ENCODE measurements at regions of chr4 and their contacts with region 1.

Region 1: DNA sequence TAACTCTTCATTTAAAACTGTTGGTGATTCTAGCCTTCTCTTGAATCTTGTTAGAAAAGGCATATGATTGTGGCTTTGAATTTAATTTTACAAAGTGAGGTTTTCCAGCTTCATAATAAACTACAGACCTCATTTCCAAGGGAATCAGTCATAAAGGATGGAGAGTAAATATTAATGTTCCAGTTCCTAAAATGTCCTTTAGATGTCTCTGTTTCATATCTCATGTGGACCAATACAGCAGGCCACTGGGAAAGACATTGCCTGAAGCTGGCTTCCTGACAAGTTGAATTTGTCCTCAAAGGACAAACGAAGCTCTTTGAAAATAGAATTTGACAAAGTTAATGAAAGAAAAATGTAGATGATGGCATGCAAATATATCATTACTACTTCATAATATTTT is 125.4 kb downstream of the ZNF330 start:
- DNase-seq: no peak
- H3K4me3 ChIP-seq: no peak overlapping the region
- H3K27ac ChIP-seq: no peak overlapping the region
- H3K4me1 ChIP-seq: peaks cover 0 to 11% (median 3%) of the 10 kb centered on the region in 4 donors
- H3K27me3 ChIP-seq: no peaks in the 10 kb centered on the region
- CTCF ChIP-seq: peak; percentile 55 to 67 (median 66)
- EP300 ChIP-seq: no peak
- POLR2A ChIP-seq: no peak

Region 2: DNA sequence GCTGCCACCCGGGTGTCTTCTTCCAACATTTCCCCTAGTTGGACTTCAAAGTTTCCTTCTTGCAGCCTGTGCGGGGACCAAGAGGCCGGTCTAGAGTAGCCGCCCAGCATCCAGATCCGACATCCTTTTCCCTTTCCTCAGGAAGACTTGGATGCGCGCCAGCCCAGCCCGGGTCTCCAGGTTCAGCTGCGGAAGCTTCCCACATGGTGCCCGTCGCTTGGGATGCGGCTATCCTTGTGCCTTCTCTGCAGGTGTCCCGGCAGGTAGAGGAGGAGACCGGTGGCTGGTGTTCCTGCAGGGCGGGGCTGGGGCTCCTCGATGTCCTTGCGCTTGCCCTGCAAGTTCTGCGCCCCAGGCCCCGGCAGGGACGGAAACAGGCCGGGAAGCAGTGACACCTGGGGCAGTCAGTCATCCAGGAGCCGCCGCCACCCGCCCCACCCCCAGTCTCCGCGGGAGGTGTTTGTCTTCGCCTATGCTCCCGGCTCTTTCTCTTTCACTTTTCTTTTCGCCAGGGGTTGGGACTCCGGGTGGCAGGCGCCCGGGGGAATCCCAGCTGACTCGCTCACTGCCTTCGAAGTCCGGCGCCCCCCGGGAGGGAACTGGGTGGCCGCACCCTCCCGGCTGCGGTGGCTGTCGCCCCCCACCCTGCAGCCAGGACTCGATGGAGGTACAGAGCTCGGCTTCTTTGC is 290.1 kb after region 1 on chr4 and contains the start of gene IL15:
- intact Hi-C with region 1: loop called (anchors 10 kb)
- DNase-seq: no peak
- H3K4me3 ChIP-seq: peak within 1 kb of the TSS; percentile 70 to 95 (median 86)
- H3K27ac ChIP-seq: peak within 1 kb of the TSS; percentile 73 to 83 (median 81)
- H3K4me1 ChIP-seq: peaks cover 5 to 24% (median 16%) of the 10 kb centered on the region in 4 donors
- H3K27me3 ChIP-seq: no peaks in the 10 kb centered on the region
- CTCF ChIP-seq: no peak
- EP300 ChIP-seq: no peak
- POLR2A ChIP-seq: no peak
- total RNA-seq, gene IL15: 3.0 to 5.0 (median 3.7) TPM

Region 3: DNA sequence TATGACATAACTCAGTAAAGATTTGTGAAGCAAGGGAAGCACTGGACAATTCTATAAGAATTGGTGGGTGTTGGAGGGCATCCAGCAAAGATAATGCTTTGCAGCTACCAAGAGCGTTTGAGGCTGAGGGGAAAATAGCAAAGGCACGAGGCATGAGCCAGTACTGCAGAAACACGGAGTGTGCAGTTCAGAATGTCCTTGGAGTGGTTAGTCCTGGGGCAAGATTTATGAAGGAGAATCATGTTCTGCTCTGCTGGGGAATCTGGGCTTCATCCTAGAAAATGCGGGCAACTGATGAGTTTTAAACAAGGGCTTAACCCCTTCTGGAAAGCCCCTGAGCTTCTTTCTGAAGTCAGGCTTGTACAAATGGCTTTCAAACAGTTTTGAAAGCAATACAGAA is 742.8 kb after region 1 on chr4:
- intact Hi-C with region 1: loop called (anchors 10 kb)
- DNase-seq: no peak
- H3K4me3 ChIP-seq: no peak overlapping the region
- H3K27ac ChIP-seq: no peak overlapping the region
- H3K4me1 ChIP-seq: peaks cover 0 to 10% (median 0%) of the 10 kb centered on the region in 4 donors
- H3K27me3 ChIP-seq: no peaks in the 10 kb centered on the region
- CTCF ChIP-seq: no peak
- EP300 ChIP-seq: no peak
- POLR2A ChIP-seq: no peak